CD14-positive monocyte (primary cell): ENCODE measurements at regions of chr2 and their contacts with region 1.

Region 1: GRCh38 chr2:109558076-109558882 is 55.5 kb downstream of the SEPTIN10 start:
- DNase-seq: peak in 2 of 3 donors; percentile 19 to 55
- H3K4me3 ChIP-seq: no peak overlapping the region
- H3K4me3 Mint-ChIP-seq: no peak overlapping the region
- H3K27ac ChIP-seq: no peak overlapping the region
- H3K27ac Mint-ChIP-seq: peak overlapping the region in 1 of 7 donors; percentile 5
- H3K4me1 ChIP-seq: no peaks in the 10 kb centered on the region
- H3K4me1 Mint-ChIP-seq: peaks cover 15% of the 10 kb centered on the region
- H3K27me3 ChIP-seq: no peaks in the 10 kb centered on the region
- H3K27me3 Mint-ChIP-seq: peaks cover 0 to 6% (median 1%) of the 10 kb centered on the region in 3 donors
- CTCF ChIP-seq: no peak

Region 2: DNA sequence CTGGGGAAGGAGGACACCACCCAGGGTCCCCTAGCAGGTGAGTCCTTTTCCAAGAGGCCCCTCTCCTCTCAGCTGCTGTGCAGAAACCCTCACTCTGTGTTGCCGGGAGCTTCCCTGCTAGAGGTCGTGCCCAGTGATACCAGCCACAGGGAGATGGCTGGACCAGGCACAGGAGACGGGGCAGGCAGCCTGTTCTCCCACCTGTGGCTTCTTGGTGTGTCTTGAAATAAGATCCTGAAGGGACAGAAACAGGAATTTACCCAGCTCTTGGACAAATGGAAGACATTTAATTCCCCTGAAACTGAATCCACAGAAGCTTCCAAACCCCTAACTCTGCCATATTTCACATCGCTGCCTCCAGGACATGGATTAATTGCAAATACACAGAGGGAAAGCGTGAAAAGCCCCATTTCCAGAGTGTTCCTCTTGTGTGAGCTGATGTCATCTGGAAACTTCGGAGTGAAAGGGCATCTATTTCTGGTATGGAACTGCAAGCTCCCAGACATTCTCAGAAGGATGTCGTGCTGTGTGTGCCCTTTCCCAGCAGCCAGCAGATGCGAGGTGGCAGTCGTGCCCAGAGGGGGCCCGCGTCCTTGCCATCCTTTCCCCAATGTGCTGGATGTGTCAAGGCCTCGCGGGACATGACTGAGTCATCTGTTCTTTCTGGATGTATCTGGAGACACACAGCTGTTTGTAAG is 122.2 kb before region 1 on chr2:
- intact Hi-C with region 1: no loop called
- DNase-seq: no peak
- H3K4me3 ChIP-seq: no peak overlapping the region
- H3K4me3 Mint-ChIP-seq: no peak overlapping the region
- H3K27ac ChIP-seq: no peak overlapping the region
- H3K27ac Mint-ChIP-seq: no peak overlapping the region
- H3K4me1 ChIP-seq: no peaks in the 10 kb centered on the region
- H3K4me1 Mint-ChIP-seq: peaks cover 9% of the 10 kb centered on the region
- H3K27me3 ChIP-seq: no peaks in the 10 kb centered on the region
- H3K27me3 Mint-ChIP-seq: peaks cover 0 to 2% (median 2%) of the 10 kb centered on the region in 3 donors
- CTCF ChIP-seq: no peak

Region 3: GRCh38 chr2:109722026-109722425 is 163.7 kb after region 1 on chr2:
- intact Hi-C with region 1: loop called in 1 of 2 experiments (anchors 10 kb)
- DNase-seq: no peak
- H3K4me3 ChIP-seq: no peak overlapping the region
- H3K4me3 Mint-ChIP-seq: no peak overlapping the region
- H3K27ac ChIP-seq: no peak overlapping the region
- H3K27ac Mint-ChIP-seq: no peak overlapping the region
- H3K4me1 ChIP-seq: no peaks in the 10 kb centered on the region
- H3K4me1 Mint-ChIP-seq: no peaks in the 10 kb centered on the region
- H3K27me3 ChIP-seq: no peaks in the 10 kb centered on the region
- H3K27me3 Mint-ChIP-seq: peaks cover 0 to 14% (median 2%) of the 10 kb centered on the region in 3 donors
- CTCF ChIP-seq: no peak